ENCODE measurements at regions of chr14 and their contacts with region 1.

Region 1: GRCh38 chr14:32252030-32252670 is 49.1 kb upstream of the RNU6-8 start:
- DNase-seq: peak; percentile 56
- ATAC-seq: peak; percentile 93
- H3K4me3 Mint-ChIP-seq: no peak overlapping the region
- H3K27ac Mint-ChIP-seq: no peak overlapping the region
- H3K4me1 Mint-ChIP-seq: no peaks in the 10 kb centered on the region
- H3K27me3 Mint-ChIP-seq: no peaks in the 10 kb centered on the region

Region 2: DNA sequence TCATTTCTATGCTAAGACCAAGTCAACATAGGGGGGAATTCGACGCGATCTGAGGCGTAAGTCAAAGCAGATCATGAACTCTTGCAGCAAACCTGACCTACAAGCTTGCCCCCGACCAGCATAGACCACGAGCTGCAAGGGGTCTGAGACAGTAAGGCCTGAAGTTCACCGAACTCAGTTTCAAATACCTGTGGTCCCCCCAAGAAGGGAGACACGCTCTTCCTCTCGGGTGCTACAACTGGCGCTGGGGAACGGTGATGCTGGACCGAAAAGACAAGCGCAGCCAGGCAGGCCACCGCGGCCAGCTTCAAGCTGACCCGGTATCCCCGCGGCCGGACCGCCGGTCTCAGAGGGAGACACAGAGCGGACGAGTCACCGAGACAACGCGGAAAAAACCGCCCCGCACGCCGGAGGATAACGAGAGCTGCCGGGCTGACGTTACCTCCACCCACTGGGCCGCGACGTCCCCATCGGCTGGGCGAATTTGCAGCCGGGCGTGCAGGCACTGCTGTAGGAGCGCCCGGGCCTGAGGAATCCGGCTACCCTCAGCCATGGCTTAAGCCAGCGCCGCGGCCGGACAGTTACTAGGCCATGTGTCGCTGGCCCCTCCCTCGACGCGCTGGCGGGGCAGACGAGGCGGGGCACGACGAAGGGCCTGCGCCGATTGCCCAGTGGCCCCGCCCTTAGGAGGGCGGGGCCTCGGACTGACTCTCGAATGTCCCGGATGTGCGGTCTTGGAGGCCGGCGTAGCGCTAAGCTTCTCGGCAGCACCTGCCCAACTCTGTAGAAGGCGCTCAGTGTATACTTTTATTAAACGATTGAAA is 795.1 kb before region 1 on chr14 and contains the start of gene DTD2:
- CTCF ChIA-PET with region 1: interaction called, 5 read pairs
- POLR2A ChIA-PET with region 1: no interaction called
- intact Hi-C with region 1: loop called in 1 of 2 experiments (anchors 2 kb)
- DNase-seq: peak; percentile 95
- ATAC-seq: peak; percentile 99
- H3K4me3 Mint-ChIP-seq: peak within 1 kb of the TSS; percentile 98
- H3K27ac Mint-ChIP-seq: peak within 1 kb of the TSS; percentile 95
- H3K4me1 Mint-ChIP-seq: peaks cover 22% of the 10 kb centered on the region
- H3K27me3 Mint-ChIP-seq: peaks cover 2% of the 10 kb centered on the region
- total RNA-seq, gene DTD2: 17.5 to 21.6 TPM

Region 3: DNA sequence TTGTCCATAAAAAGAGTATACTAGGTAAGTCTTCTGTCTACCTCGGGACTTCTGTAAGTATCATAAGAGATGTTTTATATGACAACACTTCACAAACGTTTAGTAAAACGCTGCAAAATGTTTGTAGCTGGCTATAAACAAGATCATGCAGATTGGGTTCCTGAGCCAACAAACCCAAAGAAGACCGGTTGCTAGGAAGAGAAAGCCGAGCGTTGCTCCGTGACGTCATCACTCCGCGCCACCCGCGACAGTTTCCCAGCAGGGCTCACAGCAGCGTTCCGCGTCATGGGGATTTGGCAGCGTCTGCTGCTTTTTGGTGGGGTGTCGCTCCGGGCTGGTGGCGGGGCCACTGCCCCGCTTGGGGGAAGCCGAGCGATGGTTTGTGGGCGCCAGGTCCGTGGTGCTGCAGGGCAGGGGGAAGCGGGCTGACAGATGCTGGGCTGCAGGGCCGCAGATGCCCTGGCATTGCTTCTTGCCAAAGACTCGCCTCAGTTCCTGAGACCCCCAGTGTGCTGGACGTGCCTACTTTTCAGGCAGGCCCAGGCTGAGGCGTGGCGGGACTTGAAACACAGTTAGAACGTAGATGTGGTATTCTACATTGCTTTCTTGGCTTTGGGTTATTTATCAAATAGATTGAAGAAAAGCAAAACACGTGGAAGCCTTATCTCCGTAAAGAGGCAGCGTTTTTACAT is 690.8 kb before region 1 on chr14 and contains the start of gene NUBPL:
- CTCF ChIA-PET with region 1: no interaction called
- POLR2A ChIA-PET with region 1: no interaction called
- intact Hi-C with region 1: loop called in 1 of 2 experiments (anchors 5 kb)
- DNase-seq: peak; percentile 98
- ATAC-seq: peak; percentile 96
- H3K4me3 Mint-ChIP-seq: peak within 1 kb of the TSS; percentile 92
- H3K27ac Mint-ChIP-seq: peak within 1 kb of the TSS; percentile 95
- H3K4me1 Mint-ChIP-seq: peaks cover 23% of the 10 kb centered on the region
- H3K27me3 Mint-ChIP-seq: peaks cover 6% of the 10 kb centered on the region
- total RNA-seq, gene NUBPL: 9.5 to 14.9 TPM

Region 4: GRCh38 chr14:31992011-31992447 is 260.1 kb before region 1 on chr14:
- CTCF ChIA-PET with region 1: no interaction called
- POLR2A ChIA-PET with region 1: no interaction called
- intact Hi-C with region 1: no loop called
- DNase-seq: no peak
- ATAC-seq: no peak
- H3K4me3 Mint-ChIP-seq: no peak overlapping the region
- H3K27ac Mint-ChIP-seq: no peak overlapping the region
- H3K4me1 Mint-ChIP-seq: no peaks in the 10 kb centered on the region
- H3K27me3 Mint-ChIP-seq: peaks cover 9% of the 10 kb centered on the region

Region 5: DNA sequence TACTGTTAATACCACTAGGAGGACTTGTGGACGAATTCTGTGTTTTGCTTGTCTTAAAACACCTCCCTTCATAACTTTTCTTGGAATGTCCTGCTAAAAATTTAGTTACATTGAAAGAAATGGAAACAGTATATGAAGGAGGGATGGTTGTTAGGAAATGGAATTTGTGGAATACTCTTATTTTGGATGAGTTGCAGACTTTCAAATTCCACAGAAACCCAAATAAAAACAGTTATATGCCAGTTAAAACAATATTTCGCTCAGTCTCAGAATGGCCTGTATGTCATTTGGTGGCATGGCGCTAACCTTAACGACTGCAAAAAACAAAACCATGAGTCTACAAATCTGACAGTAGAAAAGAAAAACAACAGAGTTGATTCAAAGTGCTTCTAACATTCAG is 187.2 kb before region 1 on chr14:
- CTCF ChIA-PET with region 1: interaction called, 60 read pairs
- POLR2A ChIA-PET with region 1: no interaction called
- intact Hi-C with region 1: no loop called
- DNase-seq: no peak
- ATAC-seq: no peak
- H3K4me3 Mint-ChIP-seq: no peak overlapping the region
- H3K27ac Mint-ChIP-seq: no peak overlapping the region
- H3K4me1 Mint-ChIP-seq: no peaks in the 10 kb centered on the region
- H3K27me3 Mint-ChIP-seq: peaks cover 4% of the 10 kb centered on the region

Region 6: DNA sequence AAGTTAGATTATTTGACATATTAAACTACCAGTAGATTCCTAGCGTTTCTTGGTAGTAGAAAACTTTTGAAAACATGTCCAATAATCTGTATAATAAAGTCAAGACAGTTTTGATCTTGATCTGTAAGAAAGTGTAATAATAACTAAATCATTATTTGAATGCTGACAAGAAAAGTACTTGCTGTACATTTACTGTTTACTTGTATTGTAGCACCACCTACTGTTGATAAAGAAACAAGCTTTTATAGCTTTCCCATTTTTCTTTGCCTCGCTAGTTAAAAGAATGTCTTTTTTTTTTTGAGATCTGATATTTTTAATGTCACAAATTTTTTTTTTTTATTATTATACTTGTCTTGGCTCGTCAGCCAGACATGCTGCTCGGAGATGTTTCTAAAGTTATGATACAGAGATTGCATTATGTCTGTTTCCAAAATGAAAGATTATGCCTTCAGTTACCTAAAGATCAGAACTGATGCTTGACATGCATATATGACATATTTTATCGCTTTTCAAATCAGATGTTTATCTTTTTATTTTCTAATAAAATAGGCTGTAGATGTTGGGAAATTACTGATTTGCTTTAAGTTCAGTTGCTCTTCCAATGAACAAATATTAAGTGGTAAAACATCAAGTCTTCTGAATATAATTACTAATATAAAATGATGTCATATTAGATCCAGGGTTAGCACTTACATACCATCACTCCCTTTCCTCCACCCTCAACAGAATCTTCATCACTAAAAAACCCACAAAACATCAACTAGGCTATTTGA is 217.4 kb after region 1 on chr14:
- CTCF ChIA-PET with region 1: interaction called, 12 read pairs
- POLR2A ChIA-PET with region 1: no interaction called
- intact Hi-C with region 1: loop called (anchors 2 to 5 kb)
- DNase-seq: no peak
- ATAC-seq: no peak
- H3K4me3 Mint-ChIP-seq: no peak overlapping the region
- H3K27ac Mint-ChIP-seq: no peak overlapping the region
- H3K4me1 Mint-ChIP-seq: no peaks in the 10 kb centered on the region
- H3K27me3 Mint-ChIP-seq: peaks cover 9% of the 10 kb centered on the region